ENCODE measurements at regions of chr1 and their contacts with region 1.

Region 1: GRCh38 chr1:179002552-179003345 is 22.9 kb upstream of the FAM20B start:
- DNase-seq: peak; percentile 39 to 59 (median 44)
- H3K4me3 ChIP-seq: no peak overlapping the region
- H3K4me3 Mint-ChIP-seq: peak overlapping the region in 6 of 8 donors; percentile 9 to 71 (median 24)
- H3K27ac ChIP-seq: no peak overlapping the region
- H3K27ac Mint-ChIP-seq: peak overlapping the region in 5 of 7 donors; percentile 15 to 86 (median 77)
- H3K4me1 ChIP-seq: peaks cover 19% of the 10 kb centered on the region
- H3K4me1 Mint-ChIP-seq: peaks cover 11 to 21% (median 16%) of the 10 kb centered on the region in 4 donors
- H3K27me3 ChIP-seq: no peaks in the 10 kb centered on the region
- H3K27me3 Mint-ChIP-seq: peaks cover 0 to 3% of the 10 kb centered on the region in 2 donors

Region 2: DNA sequence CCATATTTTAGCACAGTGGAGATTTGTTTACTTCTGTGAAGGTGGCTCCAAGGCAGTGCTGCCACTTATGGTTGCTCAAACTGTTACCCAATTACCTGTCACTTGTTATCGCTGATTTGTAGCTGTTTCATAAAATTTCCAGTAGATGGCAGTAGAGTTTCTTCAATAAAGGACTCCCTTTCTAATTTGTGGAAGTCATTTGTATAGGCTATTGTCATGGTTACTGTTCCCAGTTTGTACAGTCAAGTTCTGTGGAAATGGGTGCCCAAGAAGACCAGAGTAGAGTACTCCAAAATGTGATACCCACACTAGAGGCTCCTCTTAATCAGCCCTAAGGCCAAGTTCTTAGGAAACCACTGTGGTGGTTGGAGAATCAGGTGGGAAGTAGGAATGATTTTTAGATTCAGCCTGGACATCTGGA is 692.1 kb before region 1 on chr1:
- CTCF ChIA-PET with region 1: interaction called, 3 read pairs
- POLR2A ChIA-PET with region 1: no interaction called
- intact Hi-C with region 1: loop called (anchors 2 kb)
- DNase-seq: peak in 4 of 5 donors; percentile 13 to 29 (median 20)
- H3K4me3 ChIP-seq: no peak overlapping the region
- H3K4me3 Mint-ChIP-seq: no peak overlapping the region
- H3K27ac ChIP-seq: no peak overlapping the region
- H3K27ac Mint-ChIP-seq: no peak overlapping the region
- H3K4me1 ChIP-seq: no peaks in the 10 kb centered on the region
- H3K4me1 Mint-ChIP-seq: no peaks in the 10 kb centered on the region
- H3K27me3 ChIP-seq: no peaks in the 10 kb centered on the region
- H3K27me3 Mint-ChIP-seq: peaks cover 0 to 5% of the 10 kb centered on the region in 2 donors

Region 3: GRCh38 chr1:178532392-178532791 is 470.4 kb before region 1 on chr1:
- CTCF ChIA-PET with region 1: interaction called, 55 read pairs
- POLR2A ChIA-PET with region 1: no interaction called
- intact Hi-C with region 1: loop called (anchors 1 kb)
- DNase-seq: peak; percentile 56 to 64 (median 60)
- H3K4me3 ChIP-seq: no peak overlapping the region
- H3K4me3 Mint-ChIP-seq: peak overlapping the region in 1 of 8 donors; percentile 16
- H3K27ac ChIP-seq: no peak overlapping the region
- H3K27ac Mint-ChIP-seq: peak overlapping the region in 3 of 7 donors; percentile 18 to 53 (median 43)
- H3K4me1 ChIP-seq: peaks cover 6% of the 10 kb centered on the region
- H3K4me1 Mint-ChIP-seq: peaks cover 0 to 6% (median 3%) of the 10 kb centered on the region in 4 donors
- H3K27me3 ChIP-seq: no peaks in the 10 kb centered on the region
- H3K27me3 Mint-ChIP-seq: peaks cover 0 to 1% of the 10 kb centered on the region in 2 donors

Region 4: GRCh38 chr1:178542560-178543356 is 460.0 kb before region 1 on chr1:
- CTCF ChIA-PET with region 1: interaction called, 37 read pairs
- POLR2A ChIA-PET with region 1: no interaction called
- intact Hi-C with region 1: no loop called
- DNase-seq: peak; percentile 73 to 88 (median 81)
- H3K4me3 ChIP-seq: peak overlapping the region; percentile 91 to 99
- H3K4me3 Mint-ChIP-seq: peak overlapping the region; percentile 92 to 95 (median 94)
- H3K27ac ChIP-seq: peak overlapping the region; percentile 39
- H3K27ac Mint-ChIP-seq: peak overlapping the region in 6 of 7 donors; percentile 65 to 90 (median 83)
- H3K4me1 ChIP-seq: peaks cover 16% of the 10 kb centered on the region
- H3K4me1 Mint-ChIP-seq: peaks cover 9 to 27% (median 11%) of the 10 kb centered on the region in 4 donors
- H3K27me3 ChIP-seq: no peaks in the 10 kb centered on the region
- H3K27me3 Mint-ChIP-seq: no peaks in the 10 kb centered on the region

Region 5: DNA sequence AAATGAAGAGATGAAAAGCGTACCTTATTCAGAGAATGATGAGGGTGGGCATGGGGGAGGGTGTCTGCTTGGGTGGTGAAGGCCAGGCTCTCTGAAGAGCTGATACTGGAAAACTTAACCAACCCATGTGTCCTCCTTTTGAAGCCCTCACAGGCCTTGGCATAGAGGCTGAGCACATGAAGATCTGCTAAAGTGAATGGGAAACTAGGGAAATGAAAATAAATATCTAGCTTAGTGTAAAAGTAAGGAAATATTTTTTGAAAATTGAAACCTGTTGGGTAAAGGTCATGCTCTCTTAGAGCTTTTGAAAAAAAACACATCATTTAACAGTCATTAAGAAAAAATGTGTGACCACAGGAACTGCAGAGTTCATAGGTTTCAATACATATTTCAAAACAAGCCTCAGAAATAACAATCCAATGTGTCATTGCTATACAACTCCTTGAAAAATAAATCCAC is 318.2 kb before region 1 on chr1:
- CTCF ChIA-PET with region 1: no interaction called
- POLR2A ChIA-PET with region 1: no interaction called
- intact Hi-C with region 1: no loop called
- DNase-seq: no peak
- H3K4me3 ChIP-seq: no peak overlapping the region
- H3K4me3 Mint-ChIP-seq: no peak overlapping the region
- H3K27ac ChIP-seq: no peak overlapping the region
- H3K27ac Mint-ChIP-seq: no peak overlapping the region
- H3K4me1 ChIP-seq: no peaks in the 10 kb centered on the region
- H3K4me1 Mint-ChIP-seq: peaks cover 0 to 1% (median 0%) of the 10 kb centered on the region in 4 donors
- H3K27me3 ChIP-seq: no peaks in the 10 kb centered on the region
- H3K27me3 Mint-ChIP-seq: peaks cover 0 to 2% of the 10 kb centered on the region in 2 donors

Region 6: DNA sequence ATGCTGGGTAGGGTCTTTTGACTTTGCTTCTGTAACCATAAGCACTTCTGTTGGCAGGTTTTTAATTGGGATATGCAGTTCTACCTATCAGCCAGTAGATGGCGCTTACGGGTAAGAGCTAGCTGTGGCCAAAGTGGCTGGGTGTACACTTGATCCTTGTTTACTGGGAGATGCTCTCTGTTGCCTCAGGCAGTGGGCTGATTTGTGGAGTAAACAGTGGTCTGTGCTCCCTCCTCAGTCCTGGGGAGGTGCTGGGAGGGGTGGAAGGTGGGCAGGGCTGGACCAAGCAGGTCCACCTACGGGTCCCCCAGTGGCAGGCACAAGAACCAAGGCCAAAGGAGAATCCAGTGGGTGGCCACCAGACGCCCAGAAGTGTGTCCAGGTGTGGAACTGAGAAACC is 234.3 kb before region 1 on chr1:
- CTCF ChIA-PET with region 1: interaction called, 16 read pairs
- POLR2A ChIA-PET with region 1: no interaction called
- intact Hi-C with region 1: no loop called
- DNase-seq: peak in 4 of 5 donors; percentile 30 to 40 (median 33)
- H3K4me3 ChIP-seq: no peak overlapping the region
- H3K4me3 Mint-ChIP-seq: no peak overlapping the region
- H3K27ac ChIP-seq: no peak overlapping the region
- H3K27ac Mint-ChIP-seq: no peak overlapping the region
- H3K4me1 ChIP-seq: no peaks in the 10 kb centered on the region
- H3K4me1 Mint-ChIP-seq: peaks cover 0 to 2% (median 0%) of the 10 kb centered on the region in 4 donors
- H3K27me3 ChIP-seq: no peaks in the 10 kb centered on the region
- H3K27me3 Mint-ChIP-seq: no peaks in the 10 kb centered on the region

Region 7: GRCh38 chr1:178774263-178774662 is 228.5 kb before region 1 on chr1:
- CTCF ChIA-PET with region 1: interaction called, 14 read pairs
- POLR2A ChIA-PET with region 1: no interaction called
- intact Hi-C with region 1: loop called (anchors 2 kb)
- DNase-seq: peak in 4 of 5 donors; percentile 6 to 25 (median 8)
- H3K4me3 ChIP-seq: no peak overlapping the region
- H3K4me3 Mint-ChIP-seq: no peak overlapping the region
- H3K27ac ChIP-seq: no peak overlapping the region
- H3K27ac Mint-ChIP-seq: no peak overlapping the region
- H3K4me1 ChIP-seq: no peaks in the 10 kb centered on the region
- H3K4me1 Mint-ChIP-seq: no peaks in the 10 kb centered on the region
- H3K27me3 ChIP-seq: no peaks in the 10 kb centered on the region
- H3K27me3 Mint-ChIP-seq: no peaks in the 10 kb centered on the region

Region 8: GRCh38 chr1:178945763-178946266 is 56.9 kb before region 1 on chr1:
- CTCF ChIA-PET with region 1: no interaction called
- POLR2A ChIA-PET with region 1: no interaction called
- intact Hi-C with region 1: no loop called
- DNase-seq: no peak
- H3K4me3 ChIP-seq: no peak overlapping the region
- H3K4me3 Mint-ChIP-seq: no peak overlapping the region
- H3K27ac ChIP-seq: no peak overlapping the region
- H3K27ac Mint-ChIP-seq: no peak overlapping the region
- H3K4me1 ChIP-seq: no peaks in the 10 kb centered on the region
- H3K4me1 Mint-ChIP-seq: peaks cover 0 to 1% (median 0%) of the 10 kb centered on the region in 4 donors
- H3K27me3 ChIP-seq: no peaks in the 10 kb centered on the region
- H3K27me3 Mint-ChIP-seq: peaks cover 5 to 19% of the 10 kb centered on the region in 2 donors

Measured in CD4-positive, alpha-beta memory T cell (primary cell).